PC-3 (cell line): ENCODE measurements at regions of chr22 and their contacts with region 1.

Region 1: GRCh38 chr22:20079745-20080444 is at the start of gene DGCR8:
- DNase-seq: peak; percentile 93
- ATAC-seq: peak; percentile 90
- H3K4me3 ChIP-seq: peak within 1 kb of the TSS; percentile 93
- H3K27ac ChIP-seq: peak within 1 kb of the TSS; percentile 73
- H3K4me1 ChIP-seq: peaks cover 17% of the 10 kb centered on the region
- H3K27me3 ChIP-seq: no peaks in the 10 kb centered on the region
- CTCF ChIP-seq: no peak
- total RNA-seq, gene DGCR8: 41.7 and 43.6 TPM in 2 replicates

Region 2: GRCh38 chr22:20116951-20117645 is 37.2 kb after region 1 on chr22 and contains the start of gene TRMT2A:
- CTCF ChIA-PET with region 1: no interaction called
- POLR2A ChIA-PET with region 1: no interaction called
- intact Hi-C with region 1: loop called (anchors 2 kb)
- DNase-seq: peak; percentile 91
- ATAC-seq: peak; percentile 78
- H3K4me3 ChIP-seq: peak within 1 kb of the TSS; percentile 95
- H3K27ac ChIP-seq: peak within 1 kb of the TSS; percentile 53
- H3K4me1 ChIP-seq: peaks cover 24% of the 10 kb centered on the region
- H3K27me3 ChIP-seq: no peaks in the 10 kb centered on the region
- CTCF ChIP-seq: peak; percentile 26; the same call in 1 of the 2 replicates
- total RNA-seq, gene TRMT2A: 58.9 and 62.1 TPM in 2 replicates